PC-3 (cell line): ENCODE measurements at regions of chr5 and their contacts with region 1.

Region 1: DNA sequence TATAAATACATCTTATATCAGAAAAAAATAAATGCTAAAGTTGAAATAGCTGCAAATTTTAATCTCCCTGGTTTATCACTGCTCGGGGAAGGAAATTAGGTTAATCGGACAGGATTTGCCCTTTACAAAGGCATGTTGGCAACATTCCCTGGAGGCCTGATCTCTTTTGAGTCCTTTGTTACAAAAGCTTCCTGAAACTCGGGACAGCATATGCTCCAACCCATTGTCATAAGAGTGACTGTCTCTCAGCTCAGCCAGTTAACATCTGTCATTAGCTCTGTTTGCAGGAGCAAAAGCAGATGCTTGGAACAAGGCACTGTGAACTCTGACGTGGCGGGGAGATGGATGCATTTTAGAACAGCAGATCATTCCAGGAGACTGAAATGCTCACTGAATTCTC is 80.6 kb downstream of the MYO10 start:
- DNase-seq: peak; percentile 30
- ATAC-seq: no peak
- H3K4me3 ChIP-seq: no peak overlapping the region
- H3K27ac ChIP-seq: peak overlapping the region; percentile 60
- H3K4me1 ChIP-seq: peaks cover 32% of the 10 kb centered on the region
- H3K27me3 ChIP-seq: no peaks in the 10 kb centered on the region
- CTCF ChIP-seq: no peak

Region 2: GRCh38 chr5:16894236-16895057 is 39.0 kb after region 1 on chr5:
- CTCF ChIA-PET with region 1: no interaction called
- POLR2A ChIA-PET with region 1: no interaction called
- intact Hi-C with region 1: loop called (anchors 5 kb)
- DNase-seq: peak; percentile 100
- ATAC-seq: peak; percentile 77
- H3K4me3 ChIP-seq: peak overlapping the region; percentile 39
- H3K27ac ChIP-seq: peak overlapping the region; percentile 91
- H3K4me1 ChIP-seq: peaks cover 67% of the 10 kb centered on the region
- H3K27me3 ChIP-seq: no peaks in the 10 kb centered on the region
- CTCF ChIP-seq: no peak

Region 3: GRCh38 chr5:16916262-16916865 is 60.9 kb after region 1 on chr5:
- CTCF ChIA-PET with region 1: no interaction called
- POLR2A ChIA-PET with region 1: interaction called, 3 read pairs
- intact Hi-C with region 1: loop called (anchors 5 kb)
- DNase-seq: peak; percentile 100
- ATAC-seq: peak; percentile 92
- H3K4me3 ChIP-seq: peak overlapping the region; percentile 43
- H3K27ac ChIP-seq: peak overlapping the region; percentile 74
- H3K4me1 ChIP-seq: peaks cover 53% of the 10 kb centered on the region
- H3K27me3 ChIP-seq: no peaks in the 10 kb centered on the region
- CTCF ChIP-seq: no peak